ENCODE measurements at regions of chr15 and their contacts with region 1.

Region 1: GRCh38 chr15:40857601-40858341 is 13.9 kb downstream of the SPINT1 start:
- DNase-seq: peak; percentile 69
- ATAC-seq: peak; percentile 90
- H3K4me3 ChIP-seq: no peak overlapping the region
- H3K27ac ChIP-seq: peak overlapping the region; percentile 40; the same call in 1 of the 2 replicates
- H3K4me1 ChIP-seq: peaks cover 9% of the 10 kb centered on the region; the same call in 1 of the 2 replicates
- H3K27me3 ChIP-seq: no peaks in the 10 kb centered on the region
- CTCF ChIP-seq: peak; percentile 98

Region 2: DNA sequence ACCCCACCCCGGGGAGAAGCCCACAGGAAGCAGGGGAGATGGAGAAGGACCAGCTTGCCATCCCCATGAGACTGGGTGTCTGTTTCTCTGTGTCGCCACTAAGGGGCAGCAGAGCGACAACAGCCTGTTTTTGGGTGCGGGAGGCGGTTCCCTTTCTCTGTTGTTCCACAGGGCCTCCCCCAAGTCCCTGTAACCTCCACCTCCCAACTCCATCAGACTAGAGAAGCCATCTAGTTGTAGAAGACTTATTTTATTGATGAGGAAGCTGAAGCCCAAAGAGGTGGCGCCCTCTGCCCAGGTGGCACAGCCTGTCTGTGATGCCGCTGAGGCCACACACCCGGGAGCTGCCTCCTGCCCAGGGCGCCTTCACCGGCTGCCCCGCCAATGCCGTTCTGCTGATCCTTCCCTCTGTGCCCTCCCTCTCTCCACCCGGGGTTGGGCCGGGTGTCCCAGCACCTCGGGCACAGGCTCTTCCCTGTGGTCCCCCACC is 513.1 kb before region 1 on chr15:
- CTCF ChIA-PET with region 1: interaction called, 15 read pairs
- POLR2A ChIA-PET with region 1: no interaction called
- in situ Hi-C with region 1: no loop called
- intact Hi-C with region 1: no loop called
- DNase-seq: no peak
- ATAC-seq: peak; percentile 42
- H3K4me3 ChIP-seq: no peak overlapping the region
- H3K27ac ChIP-seq: no peak overlapping the region
- H3K4me1 ChIP-seq: peaks cover 39% of the 10 kb centered on the region
- H3K27me3 ChIP-seq: no peaks in the 10 kb centered on the region
- CTCF ChIP-seq: peak; percentile 93

Region 3: GRCh38 chr15:40388946-40389841 is 468.6 kb before region 1 on chr15:
- CTCF ChIA-PET with region 1: no interaction called
- POLR2A ChIA-PET with region 1: no interaction called
- in situ Hi-C with region 1: no loop called
- intact Hi-C with region 1: no loop called
- DNase-seq: no peak
- ATAC-seq: 0 out of 2 replicates have a peak, but pooled peaks have one; percentile 35
- H3K4me3 ChIP-seq: no peak overlapping the region
- H3K27ac ChIP-seq: no peak overlapping the region
- H3K4me1 ChIP-seq: peaks cover 8% of the 10 kb centered on the region; the same call in 1 of the 2 replicates
- H3K27me3 ChIP-seq: no peaks in the 10 kb centered on the region
- CTCF ChIP-seq: no peak

Region 4: GRCh38 chr15:40776522-40777137 is 81.1 kb before region 1 on chr15:
- CTCF ChIA-PET with region 1: no interaction called
- POLR2A ChIA-PET with region 1: no interaction called
- in situ Hi-C with region 1: no loop called
- intact Hi-C with region 1: no loop called
- DNase-seq: no peak
- ATAC-seq: no peak
- H3K4me3 ChIP-seq: no peak overlapping the region
- H3K27ac ChIP-seq: no peak overlapping the region
- H3K4me1 ChIP-seq: no peaks in the 10 kb centered on the region
- H3K27me3 ChIP-seq: no peaks in the 10 kb centered on the region
- CTCF ChIP-seq: no peak

Region 5: DNA sequence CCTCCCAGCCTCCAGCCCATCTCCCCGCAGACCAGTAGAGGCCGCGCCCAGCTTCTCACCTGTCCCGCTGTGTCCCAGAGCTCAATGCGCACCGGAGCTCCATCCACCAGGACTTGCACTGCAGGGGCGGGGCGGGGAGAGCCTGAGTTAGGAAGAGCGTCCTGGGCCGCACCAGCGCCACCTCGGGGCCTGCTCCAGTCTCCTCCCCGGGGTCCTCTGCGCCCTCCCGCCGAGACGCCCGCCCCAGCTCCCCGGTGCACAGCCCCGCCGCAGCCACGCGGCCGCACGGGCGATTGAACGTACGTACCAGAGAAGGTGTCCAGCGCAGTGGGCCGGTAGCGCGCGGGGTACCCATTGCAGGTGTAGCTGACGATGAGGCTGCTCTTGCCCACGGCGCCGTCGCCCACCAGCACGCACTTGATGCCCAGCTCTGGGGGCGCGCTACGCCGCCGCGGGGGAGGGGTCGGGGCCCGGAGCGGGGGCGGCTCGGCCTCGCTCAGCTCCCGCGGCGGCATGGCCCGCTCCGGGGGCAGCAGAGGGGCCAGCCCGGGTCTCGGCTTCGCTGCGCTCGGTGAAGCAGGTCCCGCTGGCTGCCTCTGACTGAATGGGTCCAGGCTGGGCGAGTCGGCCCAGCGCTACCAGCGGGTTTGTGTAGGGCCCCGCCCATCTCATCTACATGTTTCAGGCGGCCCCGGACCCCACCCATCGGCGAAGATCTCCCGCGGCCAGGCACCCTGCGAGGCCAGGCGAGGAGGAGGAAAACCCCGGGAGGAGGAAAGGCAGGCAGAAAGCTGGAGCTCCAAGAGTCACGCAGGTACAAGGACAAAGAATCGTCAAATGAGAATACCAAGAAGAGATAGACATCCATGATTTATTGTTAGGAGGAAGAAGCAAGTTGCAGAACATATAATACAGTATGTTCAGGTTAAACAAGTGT is 16.1 kb after region 1 on chr15 and contains the start of gene RHOV:
- CTCF ChIA-PET with region 1: interaction called, 70 read pairs
- POLR2A ChIA-PET with region 1: interaction called, 4 read pairs
- in situ Hi-C with region 1: no loop called
- intact Hi-C with region 1: no loop called
- DNase-seq: no peak
- ATAC-seq: peak; percentile 94
- H3K4me3 ChIP-seq: peak within 1 kb of the TSS; percentile 51 to 59
- H3K27ac ChIP-seq: no peak within 1 kb of the TSS
- H3K4me1 ChIP-seq: peaks cover 4% of the 10 kb centered on the region; the same call in 1 of the 2 replicates
- H3K27me3 ChIP-seq: no peaks in the 10 kb centered on the region
- CTCF ChIP-seq: no peak; the same call in 1 of the 2 replicates
- total RNA-seq, gene RHOV: 4.2 TPM

Region 6: DNA sequence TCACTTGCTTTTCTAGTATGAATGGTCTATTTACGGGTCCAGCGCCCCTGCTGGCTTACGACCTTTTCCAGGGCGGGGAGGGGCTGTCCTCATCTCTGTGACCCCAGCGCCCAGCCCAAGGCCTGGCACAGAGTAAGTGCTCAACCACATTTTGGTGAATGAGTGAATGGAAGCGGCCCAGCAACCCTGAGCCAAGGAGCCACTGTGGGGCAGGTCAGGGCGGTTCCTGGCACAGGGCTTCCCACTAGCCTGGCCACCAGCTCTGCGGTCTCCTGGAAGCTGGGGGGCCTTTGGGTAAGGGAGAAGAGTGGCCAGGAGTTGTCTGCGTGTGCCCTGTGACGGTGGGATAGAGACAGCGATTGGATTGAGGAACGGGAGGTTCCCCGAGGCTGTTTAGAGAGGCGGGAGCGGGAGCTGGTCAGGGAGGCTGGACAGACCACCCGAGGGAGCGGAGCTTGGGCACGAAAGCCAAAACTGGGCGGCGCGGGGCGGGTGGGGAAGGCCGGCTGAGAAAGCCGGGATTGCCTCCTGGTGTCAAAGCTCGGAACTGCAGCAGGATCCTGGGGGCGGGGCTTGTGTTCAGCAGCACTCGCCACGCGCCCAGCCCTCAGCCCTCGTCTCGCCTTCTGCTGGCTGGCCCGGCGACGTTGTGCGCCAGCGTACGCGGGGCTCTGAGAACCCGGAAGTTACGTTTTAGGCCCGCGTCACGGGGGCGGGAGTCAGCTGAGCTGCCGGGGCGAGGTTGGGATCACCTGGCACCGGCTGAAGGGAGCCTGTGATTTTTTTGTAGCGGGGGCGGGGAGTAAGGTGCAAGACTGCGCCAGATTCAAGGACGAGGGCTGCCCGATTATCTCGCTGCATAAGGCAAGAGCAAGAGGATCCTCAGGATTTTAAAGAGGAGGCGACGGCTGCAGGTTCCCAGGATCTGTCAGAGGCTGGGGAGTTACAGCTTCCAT is 36.2 kb after region 1 on chr15 and contains the start of gene VPS18:
- CTCF ChIA-PET with region 1: interaction called, 74 read pairs
- POLR2A ChIA-PET with region 1: interaction called, 5 read pairs
- in situ Hi-C with region 1: no loop called
- intact Hi-C with region 1: loop called (anchors 2 kb)
- DNase-seq: peak; percentile 82
- ATAC-seq: peak; percentile 97
- H3K4me3 ChIP-seq: peak within 1 kb of the TSS; percentile 94 to 97
- H3K27ac ChIP-seq: peak within 1 kb of the TSS; percentile 90
- H3K4me1 ChIP-seq: peaks cover 9% of the 10 kb centered on the region
- H3K27me3 ChIP-seq: no peaks in the 10 kb centered on the region
- CTCF ChIP-seq: peak; percentile 97
- total RNA-seq, gene VPS18: 46.7 TPM

Region 7: GRCh38 chr15:40974879-40975278 is 117.1 kb after region 1 on chr15:
- CTCF ChIA-PET with region 1: no interaction called
- POLR2A ChIA-PET with region 1: no interaction called
- in situ Hi-C with region 1: no loop called
- intact Hi-C with region 1: no loop called
- DNase-seq: no peak
- ATAC-seq: no peak
- H3K4me3 ChIP-seq: no peak overlapping the region
- H3K27ac ChIP-seq: no peak overlapping the region
- H3K4me1 ChIP-seq: no peaks in the 10 kb centered on the region
- H3K27me3 ChIP-seq: no peaks in the 10 kb centered on the region
- CTCF ChIP-seq: no peak

Region 8: DNA sequence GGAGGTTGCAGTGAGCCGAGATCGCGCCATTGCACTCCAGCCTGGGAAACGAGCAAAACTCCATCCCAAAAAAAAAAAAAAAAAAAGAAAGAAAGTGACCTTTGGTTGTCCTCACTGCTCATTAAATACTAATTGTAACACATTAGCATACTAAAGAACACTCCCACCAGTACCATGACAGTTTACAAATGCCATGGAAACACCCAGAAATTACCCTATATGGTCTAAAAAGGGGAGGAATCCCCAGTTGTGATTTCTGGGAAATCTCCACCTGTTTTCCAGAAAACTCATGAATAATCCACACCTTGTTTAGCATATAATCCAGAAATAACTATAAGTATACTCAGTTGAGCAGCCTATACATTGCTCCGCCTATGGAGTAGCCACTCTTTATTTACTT is 281.8 kb after region 1 on chr15:
- CTCF ChIA-PET with region 1: no interaction called
- POLR2A ChIA-PET with region 1: interaction called, 10 read pairs
- in situ Hi-C with region 1: no loop called
- intact Hi-C with region 1: no loop called
- DNase-seq: no peak
- ATAC-seq: no peak
- H3K4me3 ChIP-seq: no peak overlapping the region
- H3K27ac ChIP-seq: no peak overlapping the region
- H3K4me1 ChIP-seq: no peaks in the 10 kb centered on the region
- H3K27me3 ChIP-seq: no peaks in the 10 kb centered on the region
- CTCF ChIP-seq: no peak